ENCODE measurements at regions of chr5 and their contacts with region 1.

Region 1: DNA sequence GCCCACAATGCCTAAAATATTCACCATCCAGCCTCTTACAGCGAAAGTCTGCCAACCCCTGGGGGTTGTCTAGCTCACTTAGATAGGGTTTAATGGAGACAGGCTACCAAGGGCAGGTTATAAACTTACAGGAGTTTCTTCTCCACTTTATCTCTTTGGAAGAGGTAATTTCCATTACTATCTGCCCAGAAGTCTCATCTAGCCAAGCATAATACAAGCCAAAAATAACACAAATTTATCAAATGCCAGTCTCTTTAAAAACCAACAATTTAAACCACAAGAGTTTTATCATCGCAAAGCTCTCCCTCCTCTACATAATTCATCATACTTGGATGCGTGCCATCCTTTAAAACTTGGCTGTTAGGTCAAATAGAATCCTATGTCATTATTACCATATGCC is 6.2 kb downstream of the RBM22 start:
- DNase-seq: no peak
- ATAC-seq: no peak
- H3K4me3 Mint-ChIP-seq: no peak overlapping the region
- H3K27ac Mint-ChIP-seq: no peak overlapping the region
- H3K4me1 Mint-ChIP-seq: peaks cover 13% of the 10 kb centered on the region
- H3K27me3 Mint-ChIP-seq: no peaks in the 10 kb centered on the region

Region 2: GRCh38 chr5:150672237-150672883 is 22.3 kb before region 1 on chr5:
- CTCF ChIA-PET with region 1: no interaction called
- POLR2A ChIA-PET with region 1: no interaction called
- intact Hi-C with region 1: no loop called
- DNase-seq: peak; percentile 53
- ATAC-seq: peak; percentile 81
- H3K4me3 Mint-ChIP-seq: peak overlapping the region; percentile 66
- H3K27ac Mint-ChIP-seq: peak overlapping the region; percentile 33
- H3K4me1 Mint-ChIP-seq: no peaks in the 10 kb centered on the region
- H3K27me3 Mint-ChIP-seq: peaks cover 13% of the 10 kb centered on the region

Region 3: GRCh38 chr5:150734579-150735384 is 40.2 kb after region 1 on chr5:
- CTCF ChIA-PET with region 1: interaction called, 3 read pairs
- POLR2A ChIA-PET with region 1: interaction called, 11 read pairs
- intact Hi-C with region 1: no loop called
- DNase-seq: peak; percentile 59
- ATAC-seq: peak; percentile 79
- H3K4me3 Mint-ChIP-seq: no peak overlapping the region
- H3K27ac Mint-ChIP-seq: peak overlapping the region; percentile 76
- H3K4me1 Mint-ChIP-seq: peaks cover 50% of the 10 kb centered on the region
- H3K27me3 Mint-ChIP-seq: no peaks in the 10 kb centered on the region

Measured in activated CD4-positive, alpha-beta T cell treated with anti-CD3 and anti-CD28 coated beads for 36 hours (primary cell).